ENCODE measurements at regions of chr5 and their contacts with region 1.

Region 1: GRCh38 chr5:118519466-118519865 is 468.9 kb downstream of the DTWD2 start:
- DNase-seq: no peak
- ATAC-seq: no peak
- H3K4me3 ChIP-seq: no peak overlapping the region
- H3K27ac ChIP-seq: no peak overlapping the region
- H3K4me1 ChIP-seq: no peaks in the 10 kb centered on the region
- H3K27me3 ChIP-seq: no peaks in the 10 kb centered on the region

Region 2: GRCh38 chr5:117863586-117864296 is 655.7 kb before region 1 on chr5:
- intact Hi-C with region 1: loop called in 1 of 2 experiments (anchors 10 kb)
- DNase-seq: no peak
- ATAC-seq: no peak
- H3K4me3 ChIP-seq: no peak overlapping the region
- H3K27ac ChIP-seq: no peak overlapping the region
- H3K4me1 ChIP-seq: no peaks in the 10 kb centered on the region
- H3K27me3 ChIP-seq: no peaks in the 10 kb centered on the region